Dorsolateral prefrontal cortex (tissue), 120 donors: ENCODE measurements at regions of chr14 and their contacts with region 1.

Region 1: GRCh38 chr14:23483236-23483854 is 13.8 kb downstream of the NGDN start:
- DNase-seq: peak; percentile 53 to 87 (median 81)
- H3K4me3 ChIP-seq: peak overlapping the region in 46 of 59 donors; percentile 3 to 58 (median 30)
- H3K27ac ChIP-seq: peak overlapping the region in 51 of 59 donors; percentile 7 to 87 (median 69)
- H3K27me3 ChIP-seq: no peaks in the 10 kb centered on the region
- CTCF ChIP-seq: peak; percentile 66 to 95 (median 87)

Region 2: GRCh38 chr14:23512156-23512555 is 28.8 kb after region 1 on chr14:
- intact Hi-C with region 1: loop called (anchors 1 to 2 kb)
- DNase-seq: peak in 2 of 10 donors; percentile 54 to 59
- H3K4me3 ChIP-seq: peak overlapping the region; percentile 23 to 69 (median 51)
- H3K27ac ChIP-seq: peak overlapping the region in 58 of 59 donors; percentile 62 to 99 (median 96)
- H3K27me3 ChIP-seq: no peaks in the 10 kb centered on the region
- CTCF ChIP-seq: no peak

Region 3: GRCh38 chr14:23539248-23540140 is 56.1 kb after region 1 on chr14:
- intact Hi-C with region 1: loop called (anchors 1 to 5 kb)
- DNase-seq: peak in 1 of 10 donors; percentile 55
- H3K4me3 ChIP-seq: peak overlapping the region in 29 of 59 donors; percentile 2 to 44 (median 23)
- H3K27ac ChIP-seq: peak overlapping the region in 58 of 59 donors; percentile 40 to 92 (median 83)
- H3K27me3 ChIP-seq: no peaks in the 10 kb centered on the region
- CTCF ChIP-seq: peak; percentile 64 to 94 (median 84)

Region 4: GRCh38 chr14:23555882-23556699 is 72.7 kb after region 1 on chr14 and contains the start of gene THTPA:
- intact Hi-C with region 1: loop called (anchors 2 kb)
- DNase-seq: peak; percentile 90 to 96 (median 94)
- H3K4me3 ChIP-seq: peak within 1 kb of the TSS; percentile 56 to 100 (median 91)
- H3K27ac ChIP-seq: peak within 1 kb of the TSS; percentile 90 to 100 (median 99)
- H3K27me3 ChIP-seq: no peaks in the 10 kb centered on the region
- CTCF ChIP-seq: peak in 32 of 56 donors; percentile 4 to 52 (median 30)
- total RNA-seq, gene THTPA: 20.2 to 54.1 (median 34.9) TPM

Region 5: GRCh38 chr14:23562268-23563203 is 79.2 kb after region 1 on chr14:
- intact Hi-C with region 1: loop called (anchors 1 to 2 kb)
- DNase-seq: peak in 5 of 10 donors; percentile 61 to 76 (median 68)
- H3K4me3 ChIP-seq: no peak overlapping the region
- H3K27ac ChIP-seq: peak overlapping the region in 55 of 59 donors; percentile 7 to 84 (median 64)
- H3K27me3 ChIP-seq: no peaks in the 10 kb centered on the region
- CTCF ChIP-seq: peak; percentile 88 to 99 (median 94)

Region 6: GRCh38 chr14:23588884-23589598 is 105.7 kb after region 1 on chr14:
- intact Hi-C with region 1: no loop called
- DNase-seq: peak; percentile 73 to 89 (median 84)
- H3K4me3 ChIP-seq: peak overlapping the region in 1 of 59 donors; percentile 12
- H3K27ac ChIP-seq: peak overlapping the region in 43 of 59 donors; percentile 3 to 86 (median 52)
- H3K27me3 ChIP-seq: no peaks in the 10 kb centered on the region
- CTCF ChIP-seq: peak; percentile 38 to 87 (median 75)